ENCODE measurements at regions of chr1 and their contacts with region 1.

Region 1: DNA sequence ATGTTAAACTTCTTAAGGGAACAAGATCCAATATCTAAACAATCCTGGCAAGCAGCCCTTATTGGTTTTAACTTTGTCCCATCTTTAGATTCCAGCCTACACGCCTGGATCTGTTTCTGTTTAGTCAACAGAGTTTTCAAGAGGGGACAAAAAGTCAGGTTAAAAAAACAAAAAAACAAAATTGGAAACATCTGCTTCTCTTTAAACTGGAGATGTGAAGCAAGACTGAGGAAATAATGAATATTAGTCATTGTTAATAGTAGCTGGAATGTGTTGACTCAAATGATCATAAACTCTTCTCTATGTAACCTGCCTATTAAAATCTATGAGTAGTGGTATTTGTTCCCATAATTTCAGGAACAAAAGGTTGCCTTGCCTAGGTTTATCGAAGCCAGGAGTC is 55.0 kb downstream of the NID1 start:
- DNase-seq: peak; percentile 87
- H3K4me3 ChIP-seq: no peak overlapping the region
- H3K27ac ChIP-seq: peak overlapping the region; percentile 70
- H3K4me1 ChIP-seq: peaks cover 18% of the 10 kb centered on the region
- H3K27me3 ChIP-seq: no peaks in the 10 kb centered on the region
- CTCF ChIP-seq: no peak
- POLR2A ChIP-seq: no peak

Region 2: DNA sequence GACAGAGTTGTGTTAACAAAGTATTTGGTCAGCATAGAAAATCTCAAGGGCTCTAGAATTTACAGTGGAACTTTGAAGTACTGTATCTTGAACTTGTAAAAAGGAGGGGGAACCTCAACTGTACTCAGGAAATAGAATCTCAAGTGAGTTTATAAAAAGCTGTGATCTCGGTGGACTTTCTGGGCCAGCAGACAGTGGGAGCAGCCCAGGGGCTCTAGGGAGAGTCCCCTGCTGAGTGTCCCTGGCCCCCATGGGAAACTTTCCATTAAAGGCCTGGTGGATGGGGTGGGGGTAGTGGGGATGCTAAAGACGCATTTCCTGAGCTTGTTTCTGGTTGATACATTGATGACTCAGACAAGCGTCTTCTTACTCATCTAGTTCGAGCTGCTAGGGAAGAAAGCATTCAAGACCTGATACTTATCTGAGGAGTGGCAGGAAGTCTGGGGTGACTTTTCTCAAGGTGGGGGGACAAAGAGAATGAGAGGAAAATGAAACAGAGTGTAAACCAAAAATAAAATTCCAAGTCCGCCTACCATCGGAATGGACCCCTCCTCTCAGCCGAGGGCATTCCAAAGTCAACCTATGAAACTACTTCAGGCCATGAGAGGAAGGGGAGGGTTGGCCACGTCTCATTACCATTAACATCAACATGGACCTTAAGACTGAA is 10.5 kb before region 1 on chr1:
- CTCF ChIA-PET with region 1: interaction called, 3 read pairs
- POLR2A ChIA-PET with region 1: interaction called, 3 read pairs
- dilution Hi-C with region 1: no loop called
- intact Hi-C with region 1: loop called (anchors 1 kb)
- DNase-seq: peak; percentile 95
- H3K4me3 ChIP-seq: no peak overlapping the region
- H3K27ac ChIP-seq: peak overlapping the region; percentile 89
- H3K4me1 ChIP-seq: peaks cover 38% of the 10 kb centered on the region
- H3K27me3 ChIP-seq: no peaks in the 10 kb centered on the region
- CTCF ChIP-seq: no peak
- POLR2A ChIP-seq: peak; percentile 40

Region 3: GRCh38 chr1:236027104-236027503 is 17.2 kb after region 1 on chr1:
- CTCF ChIA-PET with region 1: no interaction called
- POLR2A ChIA-PET with region 1: no interaction called
- dilution Hi-C with region 1: no loop called
- intact Hi-C with region 1: no loop called
- DNase-seq: no peak
- H3K4me3 ChIP-seq: no peak overlapping the region
- H3K27ac ChIP-seq: no peak overlapping the region
- H3K4me1 ChIP-seq: no peaks in the 10 kb centered on the region
- H3K27me3 ChIP-seq: no peaks in the 10 kb centered on the region
- CTCF ChIP-seq: no peak
- POLR2A ChIP-seq: no peak

Region 4: GRCh38 chr1:236507022-236507700 is 497.3 kb after region 1 on chr1:
- CTCF ChIA-PET with region 1: no interaction called
- POLR2A ChIA-PET with region 1: no interaction called
- dilution Hi-C with region 1: no loop called
- intact Hi-C with region 1: no loop called
- DNase-seq: peak; percentile 31
- H3K4me3 ChIP-seq: no peak overlapping the region
- H3K27ac ChIP-seq: no peak overlapping the region
- H3K4me1 ChIP-seq: peaks cover 10% of the 10 kb centered on the region
- H3K27me3 ChIP-seq: peaks cover 2 to 5% of the 10 kb centered on the region in 2 experiments
- CTCF ChIP-seq: no peak
- POLR2A ChIP-seq: no peak

Region 5: DNA sequence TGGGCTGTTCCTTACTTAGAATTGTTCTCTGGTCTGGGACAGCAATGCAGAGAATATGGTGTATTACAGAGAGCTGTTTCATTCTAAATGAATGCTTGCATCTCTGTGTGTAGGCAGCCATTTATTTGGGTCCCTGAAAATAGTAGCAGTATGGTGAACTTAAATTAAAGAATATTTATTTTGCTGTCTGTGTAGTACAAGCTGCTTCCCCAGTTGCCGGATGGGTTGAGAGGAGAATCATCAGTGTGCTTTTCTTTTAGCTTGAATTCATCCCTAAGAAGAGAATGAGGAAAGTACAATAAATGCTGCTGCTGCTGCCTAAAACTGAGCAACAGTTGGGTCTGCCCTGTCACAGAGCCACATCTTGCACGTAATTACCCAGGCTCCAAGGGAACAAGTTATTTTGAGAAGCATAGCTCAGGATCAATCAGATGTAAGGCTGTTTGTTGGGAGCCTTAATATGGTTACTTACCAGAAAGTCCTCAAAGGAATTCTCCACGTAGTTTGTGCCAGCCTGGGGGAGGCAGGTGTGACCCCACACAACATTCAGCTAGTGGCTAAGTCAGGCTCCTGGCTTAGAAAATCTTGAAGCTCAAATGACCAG is 693.0 kb after region 1 on chr1:
- CTCF ChIA-PET with region 1: no interaction called
- POLR2A ChIA-PET with region 1: no interaction called
- dilution Hi-C with region 1: no loop called
- intact Hi-C with region 1: no loop called
- DNase-seq: no peak
- H3K4me3 ChIP-seq: no peak overlapping the region
- H3K27ac ChIP-seq: no peak overlapping the region
- H3K4me1 ChIP-seq: no peaks in the 10 kb centered on the region
- H3K27me3 ChIP-seq: no peaks in the 10 kb centered on the region
- CTCF ChIP-seq: no peak
- POLR2A ChIP-seq: no peak

Measured in endothelial cell of umbilical vein (primary cell).